ENCODE measurements at regions of chr9 and their contacts with region 1.

Region 1: GRCh38 chr9:33350310-33350709 is 52.1 kb downstream of the AQP7 start:
- DNase-seq: no peak
- ATAC-seq: peak in 6 of 8 donors; percentile 27 to 81 (median 54)
- H3K4me3 ChIP-seq: no peak overlapping the region
- H3K27ac ChIP-seq: peak overlapping the region in 6 of 10 donors; percentile 34 to 56 (median 42)
- H3K4me1 ChIP-seq: peaks cover 0 to 34% (median 13%) of the 10 kb centered on the region in 9 donors
- H3K27me3 ChIP-seq: no peaks in the 10 kb centered on the region
- CTCF ChIP-seq: no peak

Region 2: DNA sequence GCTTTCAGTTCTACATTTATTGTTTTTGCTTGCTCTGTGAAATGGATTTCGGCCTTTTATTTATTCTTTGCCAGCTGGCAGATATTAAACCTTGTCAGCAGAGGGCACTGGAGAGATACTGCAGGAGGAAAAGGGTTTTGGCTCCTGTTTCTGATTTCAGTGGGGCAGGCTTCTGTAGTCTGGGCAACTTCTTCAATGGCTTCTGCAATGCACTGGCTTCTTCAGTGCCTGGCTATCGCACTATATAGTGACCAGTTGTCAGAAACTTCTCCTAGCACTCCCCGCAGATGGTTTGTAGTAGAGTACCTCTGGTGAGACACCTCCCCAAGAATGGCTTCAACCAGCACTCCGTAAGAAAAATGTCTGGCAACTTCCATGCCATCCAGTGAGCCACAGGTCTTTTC is 63.2 kb before region 1 on chr9:
- intact Hi-C with region 1: no loop called
- DNase-seq: peak in 1 of 2 donors; percentile 34
- ATAC-seq: no peak
- H3K4me3 ChIP-seq: no peak overlapping the region
- H3K27ac ChIP-seq: peak overlapping the region in 7 of 10 donors; percentile 3 to 35 (median 24)
- H3K4me1 ChIP-seq: peaks cover 0 to 31% (median 26%) of the 10 kb centered on the region in 9 donors
- H3K27me3 ChIP-seq: no peaks in the 10 kb centered on the region
- CTCF ChIP-seq: peak; percentile 31 to 76 (median 67)

Region 3: DNA sequence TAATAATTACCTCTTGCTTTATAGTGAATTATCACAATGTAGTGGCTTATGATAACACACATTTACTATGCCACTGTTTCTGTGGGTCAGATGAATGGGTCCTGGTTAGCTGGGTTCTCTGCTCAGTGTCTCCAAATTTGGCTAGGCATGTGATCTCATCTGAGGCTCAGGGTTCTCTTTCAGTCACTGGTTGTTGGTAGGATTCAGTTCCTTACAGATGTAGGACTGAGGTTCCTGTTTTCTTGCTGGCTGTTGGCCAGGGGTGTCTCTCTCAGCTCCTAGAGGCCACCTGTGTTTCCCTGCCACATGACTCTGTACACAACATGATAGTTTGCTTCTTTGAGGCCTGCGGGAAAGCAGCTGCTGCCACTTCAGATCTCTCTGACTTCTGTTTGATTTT is 52.9 kb before region 1 on chr9:
- intact Hi-C with region 1: loop called in 1 of 10 experiments (anchors 5 kb)
- DNase-seq: peak in 1 of 2 donors; percentile 33
- ATAC-seq: peak in 7 of 8 donors; percentile 47 to 70 (median 60)
- H3K4me3 ChIP-seq: no peak overlapping the region
- H3K27ac ChIP-seq: peak overlapping the region in 2 of 10 donors; percentile 19 to 43
- H3K4me1 ChIP-seq: peaks cover 9 to 82% (median 55%) of the 10 kb centered on the region in 9 donors
- H3K27me3 ChIP-seq: no peaks in the 10 kb centered on the region
- CTCF ChIP-seq: no peak

Measured in heart right ventricle (tissue), 16 donors.